ENCODE measurements at regions of chr2 and their contacts with region 1.

Region 1: DNA sequence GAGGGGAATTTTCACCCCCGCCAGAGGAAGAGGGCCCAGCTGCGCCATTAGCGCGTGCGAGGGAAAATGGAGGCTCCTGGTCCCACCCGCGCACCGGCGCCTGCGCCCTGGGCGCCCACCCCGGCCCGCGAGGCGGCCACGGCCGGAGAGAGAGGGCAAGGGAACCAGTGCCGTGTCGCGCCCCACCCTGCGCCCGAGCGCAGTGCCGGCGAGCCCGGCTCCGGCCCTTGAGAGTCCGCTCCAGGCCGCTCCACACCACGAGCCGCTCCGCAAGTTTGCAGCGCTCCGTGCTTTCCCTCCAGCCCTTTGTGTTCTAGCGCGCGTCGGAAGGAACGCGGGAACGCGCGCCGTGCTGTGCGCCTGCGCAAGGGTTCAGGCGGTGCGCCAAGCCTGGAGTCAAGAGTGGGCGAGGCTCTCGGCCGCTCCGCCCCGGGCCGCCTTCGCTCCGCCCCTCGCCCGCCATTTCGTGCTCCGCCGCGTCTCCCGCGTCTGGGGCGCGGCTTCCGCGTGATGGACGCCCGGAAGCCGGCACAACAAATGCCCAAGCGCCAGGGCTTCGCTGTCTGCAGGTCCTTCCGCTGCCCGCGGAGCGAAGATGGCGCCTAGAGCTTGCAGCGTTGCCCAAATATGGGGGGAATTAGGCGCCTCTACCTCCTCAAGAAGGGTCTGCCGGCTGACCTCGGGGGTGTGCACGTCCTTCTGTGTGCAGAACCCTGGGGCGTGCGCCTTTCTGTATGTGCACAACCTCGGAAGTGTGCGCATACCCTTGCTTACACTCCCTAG is 46.1 kb upstream of the PTMA start:
- DNase-seq: peak; percentile 93 to 96
- H3K4me3 ChIP-seq: peak overlapping the region; percentile 41
- H3K4me3 Mint-ChIP-seq: peak overlapping the region; percentile 77
- H3K27ac Mint-ChIP-seq: peak overlapping the region; percentile 93
- H3K4me1 ChIP-seq: peaks cover 53% of the 10 kb centered on the region
- H3K4me1 Mint-ChIP-seq: peaks cover 7% of the 10 kb centered on the region
- H3K27me3 ChIP-seq: no peaks in the 10 kb centered on the region
- H3K27me3 Mint-ChIP-seq: no peaks in the 10 kb centered on the region
- CTCF ChIP-seq: no peak

Region 2: DNA sequence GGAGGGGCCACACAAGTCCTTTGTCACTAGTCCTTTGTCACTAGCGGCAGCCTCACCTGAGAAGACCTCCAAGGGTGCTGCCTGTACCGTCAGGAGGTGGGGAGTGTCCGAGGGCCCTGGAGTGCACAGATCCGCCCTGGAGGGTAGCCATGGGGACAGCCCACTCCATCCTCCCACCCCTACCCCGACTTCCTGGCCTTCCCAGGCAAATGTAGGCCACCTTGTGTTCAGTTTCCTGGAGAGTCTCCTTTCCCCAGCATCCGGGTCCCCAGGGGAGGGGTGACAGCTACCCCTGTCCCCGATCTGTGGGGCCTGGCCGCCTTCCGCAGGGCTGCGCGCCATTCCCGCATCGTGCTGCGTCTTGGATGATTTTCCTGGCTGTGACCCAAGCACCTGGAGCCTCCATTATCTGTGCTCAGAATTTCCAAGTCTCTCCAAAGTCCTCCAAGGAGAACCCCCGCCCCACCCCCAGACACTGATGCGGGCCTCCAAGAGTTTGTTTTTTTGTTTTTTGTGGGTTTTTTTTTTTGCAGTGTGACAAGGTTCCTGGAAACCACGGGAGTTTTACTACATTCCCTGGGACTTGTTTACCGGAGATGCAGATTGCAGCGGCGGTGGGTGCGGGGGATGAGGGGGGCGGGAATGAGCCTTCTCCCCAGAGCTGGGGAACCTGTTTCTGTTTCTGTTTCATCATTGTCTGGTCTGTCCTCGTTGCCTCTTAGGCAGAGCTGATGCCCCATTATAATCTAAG is 40.9 kb before region 1 on chr2:
- CTCF ChIA-PET with region 1: no interaction called
- POLR2A ChIA-PET with region 1: interaction called, 10 read pairs
- intact Hi-C with region 1: no loop called
- DNase-seq: peak; percentile 79 to 92
- H3K4me3 ChIP-seq: no peak overlapping the region
- H3K4me3 Mint-ChIP-seq: peak overlapping the region; percentile 58
- H3K27ac Mint-ChIP-seq: peak overlapping the region; percentile 88
- H3K4me1 ChIP-seq: peaks cover 37% of the 10 kb centered on the region
- H3K4me1 Mint-ChIP-seq: peaks cover 30% of the 10 kb centered on the region
- H3K27me3 ChIP-seq: no peaks in the 10 kb centered on the region
- H3K27me3 Mint-ChIP-seq: no peaks in the 10 kb centered on the region
- CTCF ChIP-seq: no peak

Region 3: DNA sequence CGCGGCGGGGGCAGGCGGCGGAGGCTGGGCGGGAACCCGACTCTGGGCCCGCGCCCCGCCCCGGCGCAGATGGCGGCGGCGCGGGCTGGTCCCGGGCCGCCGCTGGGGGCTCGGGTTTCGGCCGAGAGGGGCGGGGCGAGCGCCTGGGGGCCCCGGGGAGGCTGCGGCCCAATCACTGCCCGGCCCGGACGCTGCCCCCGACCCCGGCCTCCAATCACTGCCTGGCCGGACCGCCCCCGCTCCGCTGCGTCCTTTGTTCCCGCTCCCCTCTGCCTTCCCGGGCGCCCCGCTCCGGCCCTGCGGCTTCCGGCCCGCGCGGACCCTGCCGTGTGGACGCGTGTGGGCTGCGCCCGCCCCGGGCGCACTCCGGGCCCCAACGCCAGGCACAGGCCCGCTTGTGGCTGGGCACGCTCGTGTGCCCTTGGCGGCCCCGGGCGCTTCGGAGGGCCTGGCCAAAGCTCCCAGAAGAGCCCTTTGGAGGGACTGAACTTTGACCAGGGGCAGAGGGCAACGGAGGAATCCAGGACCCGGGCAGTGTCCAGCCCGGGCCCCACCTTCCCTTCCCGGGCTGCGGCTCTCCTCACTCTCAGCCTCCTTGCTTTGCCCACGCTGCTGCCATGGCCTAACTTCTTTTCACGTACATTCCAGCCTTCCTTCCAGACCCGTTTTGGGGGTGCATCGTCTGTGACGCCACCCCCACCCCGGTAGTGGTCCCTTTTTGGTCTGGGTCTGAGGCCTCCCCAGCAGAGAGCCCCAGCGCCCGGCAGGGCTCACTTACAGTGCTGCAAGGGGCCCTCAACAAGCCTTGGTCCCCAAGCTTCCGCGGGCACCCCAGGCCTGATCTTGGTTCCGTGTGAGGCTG is 19.0 kb after region 1 on chr2:
- CTCF ChIA-PET with region 1: interaction called, 9 read pairs
- POLR2A ChIA-PET with region 1: interaction called, 8 read pairs
- intact Hi-C with region 1: loop called (anchors 1 kb)
- DNase-seq: peak; percentile 91 to 94
- H3K4me3 ChIP-seq: peak overlapping the region; percentile 67
- H3K4me3 Mint-ChIP-seq: peak overlapping the region; percentile 81
- H3K27ac Mint-ChIP-seq: peak overlapping the region; percentile 93
- H3K4me1 ChIP-seq: peaks cover 25% of the 10 kb centered on the region
- H3K4me1 Mint-ChIP-seq: peaks cover 16% of the 10 kb centered on the region
- H3K27me3 ChIP-seq: no peaks in the 10 kb centered on the region
- H3K27me3 Mint-ChIP-seq: no peaks in the 10 kb centered on the region
- CTCF ChIP-seq: no peak

Region 4: DNA sequence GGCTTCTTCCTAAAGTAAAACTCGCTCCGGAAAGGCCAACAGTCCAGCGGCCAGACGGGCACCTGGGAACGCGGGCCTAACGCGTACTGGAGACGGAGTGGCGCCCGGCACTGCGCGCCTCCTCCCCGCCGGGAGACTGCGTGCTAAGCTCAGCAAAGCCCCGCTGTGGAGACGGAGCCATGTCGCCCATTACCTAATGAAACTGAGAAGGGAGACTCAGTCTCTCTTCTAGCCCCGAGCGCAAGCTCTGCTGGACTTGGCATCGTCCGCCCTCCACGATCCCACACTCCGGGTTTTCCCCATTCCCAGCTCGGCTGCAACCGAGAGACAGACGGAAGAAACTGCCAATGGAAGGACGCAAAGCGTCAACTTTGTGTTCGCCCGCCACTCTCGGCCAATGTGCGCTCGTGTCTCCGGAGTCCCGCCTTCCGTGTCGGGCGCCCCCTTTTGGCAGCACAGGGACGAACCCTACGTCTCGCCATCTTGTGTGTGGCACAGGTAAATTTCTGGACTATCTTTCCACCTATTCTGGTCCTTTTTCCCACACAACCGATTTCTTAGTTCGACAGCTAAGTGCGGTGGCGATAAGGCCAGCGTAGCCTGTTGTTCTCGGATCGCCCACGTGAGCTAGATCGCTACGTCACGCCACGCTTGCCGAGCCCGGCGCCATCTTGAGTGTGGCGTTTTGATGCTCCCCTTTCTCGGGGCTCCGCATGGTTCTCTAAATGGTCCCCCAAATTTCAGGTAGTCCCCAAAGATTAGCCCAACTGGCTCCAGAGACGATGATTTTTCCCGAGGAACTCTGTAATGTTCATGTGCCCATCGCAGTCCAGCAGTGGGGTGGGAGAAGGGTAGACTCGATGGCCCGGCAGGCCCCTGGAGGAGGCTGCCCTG is 44.8 kb after region 1 on chr2:
- CTCF ChIA-PET with region 1: no interaction called
- POLR2A ChIA-PET with region 1: interaction called, 8 read pairs
- intact Hi-C with region 1: loop called (anchors 1 kb)
- DNase-seq: peak; percentile 95 to 97
- H3K4me3 ChIP-seq: peak overlapping the region; percentile 73
- H3K4me3 Mint-ChIP-seq: peak overlapping the region; percentile 88
- H3K27ac Mint-ChIP-seq: peak overlapping the region; percentile 99
- H3K4me1 ChIP-seq: no peaks in the 10 kb centered on the region
- H3K4me1 Mint-ChIP-seq: peaks cover 7% of the 10 kb centered on the region
- H3K27me3 ChIP-seq: no peaks in the 10 kb centered on the region
- H3K27me3 Mint-ChIP-seq: no peaks in the 10 kb centered on the region
- CTCF ChIP-seq: peak; percentile 52 to 85

Region 5: DNA sequence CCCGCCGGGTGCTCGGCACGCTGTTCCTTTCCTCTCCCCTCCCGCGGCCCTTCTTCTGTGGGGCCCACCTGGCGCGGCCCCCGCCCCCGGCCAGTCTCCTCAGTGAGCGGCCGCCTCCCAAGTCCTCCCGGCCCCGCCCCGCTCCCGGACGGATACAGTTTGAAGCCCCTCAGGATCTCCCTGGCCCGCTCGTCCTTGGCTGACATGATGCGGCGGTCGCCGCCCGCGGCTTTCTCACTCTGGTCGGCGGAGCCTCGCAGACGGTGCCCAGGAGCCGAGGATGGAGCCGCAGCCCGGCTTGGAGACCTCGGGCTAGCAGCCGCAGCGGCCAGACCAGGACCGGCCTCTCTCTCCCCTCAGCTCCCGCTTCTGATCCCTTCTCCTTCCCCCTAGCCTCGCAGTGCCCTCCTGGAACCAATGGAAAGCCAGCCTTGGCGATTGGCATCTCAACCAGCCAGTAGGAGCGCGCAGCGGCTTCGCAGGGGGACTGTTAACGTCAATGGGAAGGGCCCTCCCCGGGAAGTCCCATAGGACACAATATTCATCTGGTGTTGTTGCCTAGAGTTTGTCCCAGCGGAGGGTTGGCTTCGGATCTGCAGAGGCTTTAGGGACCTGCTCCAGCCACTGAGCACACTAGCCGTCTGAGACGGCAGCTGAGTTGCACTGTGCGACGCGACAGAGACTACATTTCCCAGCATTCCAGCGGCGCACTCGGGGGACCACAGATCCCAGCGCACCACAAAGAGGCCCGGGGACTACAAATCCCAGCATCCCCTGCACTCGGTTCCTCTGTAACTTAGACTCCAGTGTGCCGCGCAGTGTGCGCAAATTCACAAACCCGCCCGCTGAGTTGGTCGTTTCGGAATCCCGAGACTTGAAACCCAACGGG is 118.9 kb after region 1 on chr2 and contains the start of gene PDE6D:
- CTCF ChIA-PET with region 1: no interaction called
- POLR2A ChIA-PET with region 1: no interaction called
- intact Hi-C with region 1: loop called (anchors 5 kb)
- DNase-seq: peak; percentile 97
- H3K4me3 ChIP-seq: peak within 1 kb of the TSS; percentile 76
- H3K4me3 Mint-ChIP-seq: peak within 1 kb of the TSS; percentile 92
- H3K27ac Mint-ChIP-seq: peak within 1 kb of the TSS; percentile 53
- H3K4me1 ChIP-seq: no peaks in the 10 kb centered on the region
- H3K4me1 Mint-ChIP-seq: peaks cover 4% of the 10 kb centered on the region
- H3K27me3 ChIP-seq: no peaks in the 10 kb centered on the region
- H3K27me3 Mint-ChIP-seq: no peaks in the 10 kb centered on the region
- CTCF ChIP-seq: no peak
- total RNA-seq, gene PDE6D: 8.1 and 9.1 TPM in 2 replicates

Measured in Caco-2 (cell line).